AG04450 (cell line): ENCODE measurements at regions of chr17 and their contacts with region 1.

Region 1: DNA sequence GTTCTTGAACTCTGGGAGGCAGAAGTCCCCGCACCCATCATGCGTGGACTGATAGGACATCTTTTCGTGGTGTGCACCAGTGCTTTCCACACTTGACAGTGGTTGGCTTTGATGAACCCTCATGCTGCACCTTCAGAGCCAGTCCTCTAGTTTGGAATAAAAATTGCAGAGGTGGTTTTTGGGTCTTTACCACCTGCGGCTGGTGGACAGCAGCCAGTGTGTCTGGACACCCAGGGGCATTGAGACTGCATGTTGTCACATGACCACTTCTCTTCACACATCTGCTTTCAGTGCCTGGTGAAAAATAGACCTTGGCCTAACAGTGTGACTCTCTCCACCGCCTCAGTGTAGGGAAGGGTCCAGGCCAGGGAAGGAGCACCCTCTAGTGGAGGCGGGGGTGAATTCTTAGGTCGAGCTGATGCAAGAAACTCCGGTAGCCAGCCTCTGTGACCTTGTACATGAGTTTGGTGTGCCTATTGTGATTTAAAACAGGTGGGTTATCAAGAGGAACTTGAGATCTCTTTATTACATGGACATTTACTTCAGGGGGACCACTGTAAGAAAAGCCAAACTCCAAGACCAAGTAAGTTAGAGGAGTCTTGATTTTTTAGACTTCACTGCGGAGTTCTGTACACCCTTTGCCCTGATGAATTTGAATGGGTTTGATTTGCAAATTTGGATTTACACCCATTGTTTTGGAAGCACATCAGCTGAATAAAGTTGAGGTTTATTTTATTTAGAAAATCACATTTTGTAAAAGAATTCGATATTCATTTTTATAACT is 17.9 kb downstream of the GOSR2 start:
- DNase-seq: peak; percentile 29
- H3K4me3 ChIP-seq: no peak overlapping the region
- H3K27ac ChIP-seq: no peak overlapping the region
- H3K27me3 ChIP-seq: no peaks in the 10 kb centered on the region
- CTCF ChIP-seq: peak; percentile 97

Region 2: DNA sequence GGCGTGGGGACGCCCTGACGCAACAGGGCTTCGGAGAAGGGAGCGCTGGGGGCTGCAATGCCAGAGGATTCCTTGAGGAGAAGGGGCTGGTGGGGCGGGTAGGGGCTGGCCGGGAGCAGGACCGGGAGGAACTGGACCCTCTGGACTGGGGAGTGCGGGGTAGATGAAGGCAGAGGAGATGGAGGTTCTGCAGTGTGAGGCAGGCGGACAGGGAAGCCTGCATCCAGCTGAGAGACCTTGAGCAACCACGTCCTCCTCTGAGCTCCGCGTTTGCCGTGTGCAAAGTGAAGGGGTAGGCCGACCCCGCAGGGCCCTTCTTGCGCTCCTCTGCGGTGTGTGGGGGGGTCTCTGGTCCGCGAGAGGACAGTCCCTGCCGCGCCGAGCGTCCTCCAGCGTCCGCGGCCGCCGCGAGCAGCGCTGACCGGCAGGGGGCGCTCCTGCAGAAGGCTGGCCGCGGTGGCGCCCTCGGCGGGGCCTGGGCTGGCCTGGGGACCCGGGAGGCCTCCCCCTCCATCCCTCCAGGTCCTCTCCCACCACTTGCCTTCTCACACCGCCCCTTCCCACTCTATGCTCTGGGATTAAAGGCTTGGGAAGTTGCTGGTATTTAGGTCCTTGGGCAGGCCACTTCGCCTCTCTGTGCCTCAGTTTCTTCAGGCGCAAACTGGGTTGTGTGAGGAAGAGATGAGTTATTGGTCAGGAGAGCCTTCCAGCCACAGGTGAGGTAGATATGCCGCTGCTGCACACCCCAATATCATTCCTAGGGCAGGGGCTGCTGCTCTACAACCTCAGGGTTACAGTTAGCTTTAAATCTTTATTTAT is 99.0 kb before region 1 on chr17:
- CTCF ChIA-PET with region 1: interaction called, 20 read pairs
- POLR2A ChIA-PET with region 1: interaction called, 4 read pairs
- DNase-seq: no peak
- H3K4me3 ChIP-seq: no peak overlapping the region
- H3K27ac ChIP-seq: no peak overlapping the region
- H3K27me3 ChIP-seq: peaks cover 34% of the 10 kb centered on the region
- CTCF ChIP-seq: peak; percentile 53

Region 3: DNA sequence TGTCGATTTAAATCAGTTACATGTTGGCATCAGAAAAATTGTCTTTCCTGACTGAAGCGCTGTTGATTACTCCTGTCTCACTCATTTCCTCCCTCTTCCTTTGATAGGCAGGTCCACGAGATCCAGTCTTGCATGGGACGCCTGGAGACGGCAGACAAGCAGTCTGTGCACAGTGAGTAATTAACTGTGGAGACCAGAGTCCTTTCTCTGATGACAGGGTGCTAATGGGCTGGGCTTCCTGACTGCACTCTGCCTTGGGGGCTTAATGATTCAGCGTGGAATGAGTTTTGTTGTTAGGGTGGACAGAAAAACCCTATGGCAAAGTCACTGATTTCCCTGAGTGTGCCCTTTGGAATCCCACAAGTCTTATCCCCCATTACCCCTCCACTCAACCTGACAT is 11.4 kb before region 1 on chr17:
- CTCF ChIA-PET with region 1: interaction called, 20 read pairs
- POLR2A ChIA-PET with region 1: no interaction called
- DNase-seq: no peak
- H3K4me3 ChIP-seq: no peak overlapping the region
- H3K27ac ChIP-seq: no peak overlapping the region
- H3K27me3 ChIP-seq: no peaks in the 10 kb centered on the region
- CTCF ChIP-seq: no peak

Region 4: DNA sequence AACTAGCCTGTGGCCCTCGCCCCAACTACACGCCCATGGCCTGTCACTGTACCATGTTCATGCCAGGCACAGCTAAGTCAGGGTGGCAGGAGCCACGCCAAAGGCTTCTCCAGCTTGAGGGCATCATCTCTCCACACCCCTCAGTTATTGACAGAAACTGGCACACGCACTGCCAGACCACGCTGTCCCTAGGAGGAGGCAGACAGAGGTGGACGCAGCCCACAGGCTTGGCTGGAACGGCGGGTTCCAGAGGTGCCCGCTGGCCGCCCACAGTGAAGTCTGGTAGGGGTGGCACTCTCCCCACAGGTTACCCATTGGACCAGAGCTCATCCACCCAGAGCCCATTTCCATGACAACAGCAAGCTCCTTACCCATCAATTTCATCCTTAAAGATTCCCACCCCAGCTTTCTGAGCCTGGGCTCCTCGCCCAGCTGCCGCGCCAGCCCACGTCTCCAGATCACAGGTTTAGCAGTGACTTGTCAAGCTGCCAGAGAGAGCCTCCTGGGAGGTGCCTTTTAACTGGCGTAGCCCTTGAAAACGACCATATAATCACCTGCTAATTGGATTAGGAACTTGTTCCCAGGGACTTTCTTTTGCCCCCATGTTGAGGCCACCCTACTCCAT is 10.3 kb after region 1 on chr17:
- CTCF ChIA-PET with region 1: interaction called, 12 read pairs
- POLR2A ChIA-PET with region 1: interaction called, 3 read pairs
- DNase-seq: no peak
- H3K4me3 ChIP-seq: no peak overlapping the region
- H3K27ac ChIP-seq: no peak overlapping the region
- H3K27me3 ChIP-seq: peaks cover 6% of the 10 kb centered on the region
- CTCF ChIP-seq: no peak

Region 5: GRCh38 chr17:46962374-46962790 is 21.6 kb after region 1 on chr17:
- CTCF ChIA-PET with region 1: interaction called, 11 read pairs
- POLR2A ChIA-PET with region 1: no interaction called
- DNase-seq: peak; percentile 32
- H3K4me3 ChIP-seq: no peak overlapping the region
- H3K27ac ChIP-seq: no peak overlapping the region
- H3K27me3 ChIP-seq: peaks cover 24% of the 10 kb centered on the region
- CTCF ChIP-seq: no peak

Region 6: GRCh38 chr17:46995841-46996571 is 55.2 kb after region 1 on chr17:
- CTCF ChIA-PET with region 1: interaction called, 47 read pairs
- POLR2A ChIA-PET with region 1: interaction called, 5 read pairs
- DNase-seq: no peak
- H3K4me3 ChIP-seq: no peak overlapping the region
- H3K27ac ChIP-seq: no peak overlapping the region
- H3K27me3 ChIP-seq: no peaks in the 10 kb centered on the region
- CTCF ChIP-seq: no peak

Region 7: DNA sequence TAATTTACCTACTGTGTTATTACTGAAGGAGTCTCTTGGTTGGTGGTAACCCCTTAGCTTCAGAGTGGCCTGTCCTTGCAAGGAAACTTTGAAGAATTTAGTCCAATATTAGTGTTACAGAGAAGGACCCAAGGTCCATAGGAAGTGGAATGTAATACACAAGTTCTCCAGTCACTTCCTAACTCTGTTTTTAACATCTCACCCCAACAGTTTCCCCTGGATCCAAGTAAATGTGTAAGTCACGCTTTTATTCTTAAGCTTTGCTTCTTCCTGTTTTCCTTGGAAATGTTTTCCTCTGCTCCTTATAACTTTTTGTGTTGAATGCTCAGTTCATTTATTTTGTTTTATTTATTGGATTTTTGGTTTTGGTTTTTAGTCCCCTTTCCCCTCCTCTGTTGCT is 64.1 kb after region 1 on chr17:
- CTCF ChIA-PET with region 1: interaction called, 47 read pairs
- POLR2A ChIA-PET with region 1: interaction called, 3 read pairs
- DNase-seq: no peak
- H3K4me3 ChIP-seq: no peak overlapping the region
- H3K27ac ChIP-seq: no peak overlapping the region
- H3K27me3 ChIP-seq: no peaks in the 10 kb centered on the region
- CTCF ChIP-seq: no peak

Region 8: GRCh38 chr17:47095268-47095667 is 154.5 kb after region 1 on chr17:
- CTCF ChIA-PET with region 1: no interaction called
- POLR2A ChIA-PET with region 1: no interaction called
- DNase-seq: no peak
- H3K4me3 ChIP-seq: no peak overlapping the region
- H3K27ac ChIP-seq: no peak overlapping the region
- H3K27me3 ChIP-seq: no peaks in the 10 kb centered on the region
- CTCF ChIP-seq: no peak